PC-3 (cell line): ENCODE measurements at regions of chr9 and their contacts with region 1.

Region 1: GRCh38 chr9:114487607-114488300 is 17.5 kb downstream of the WHRN start:
- DNase-seq: peak; percentile 82
- ATAC-seq: peak; percentile 90
- H3K4me3 ChIP-seq: no peak overlapping the region
- H3K27ac ChIP-seq: no peak overlapping the region
- H3K4me1 ChIP-seq: peaks cover 9% of the 10 kb centered on the region
- H3K27me3 ChIP-seq: no peaks in the 10 kb centered on the region
- CTCF ChIP-seq: peak; percentile 84

Region 2: GRCh38 chr9:114138552-114138971 is 349.2 kb before region 1 on chr9:
- CTCF ChIA-PET with region 1: no interaction called
- POLR2A ChIA-PET with region 1: no interaction called
- intact Hi-C with region 1: no loop called
- DNase-seq: no peak
- ATAC-seq: no peak
- H3K4me3 ChIP-seq: no peak overlapping the region
- H3K27ac ChIP-seq: no peak overlapping the region
- H3K4me1 ChIP-seq: no peaks in the 10 kb centered on the region
- H3K27me3 ChIP-seq: peaks cover 21% of the 10 kb centered on the region; the same call in 1 of the 2 replicates
- CTCF ChIP-seq: no peak

Region 3: DNA sequence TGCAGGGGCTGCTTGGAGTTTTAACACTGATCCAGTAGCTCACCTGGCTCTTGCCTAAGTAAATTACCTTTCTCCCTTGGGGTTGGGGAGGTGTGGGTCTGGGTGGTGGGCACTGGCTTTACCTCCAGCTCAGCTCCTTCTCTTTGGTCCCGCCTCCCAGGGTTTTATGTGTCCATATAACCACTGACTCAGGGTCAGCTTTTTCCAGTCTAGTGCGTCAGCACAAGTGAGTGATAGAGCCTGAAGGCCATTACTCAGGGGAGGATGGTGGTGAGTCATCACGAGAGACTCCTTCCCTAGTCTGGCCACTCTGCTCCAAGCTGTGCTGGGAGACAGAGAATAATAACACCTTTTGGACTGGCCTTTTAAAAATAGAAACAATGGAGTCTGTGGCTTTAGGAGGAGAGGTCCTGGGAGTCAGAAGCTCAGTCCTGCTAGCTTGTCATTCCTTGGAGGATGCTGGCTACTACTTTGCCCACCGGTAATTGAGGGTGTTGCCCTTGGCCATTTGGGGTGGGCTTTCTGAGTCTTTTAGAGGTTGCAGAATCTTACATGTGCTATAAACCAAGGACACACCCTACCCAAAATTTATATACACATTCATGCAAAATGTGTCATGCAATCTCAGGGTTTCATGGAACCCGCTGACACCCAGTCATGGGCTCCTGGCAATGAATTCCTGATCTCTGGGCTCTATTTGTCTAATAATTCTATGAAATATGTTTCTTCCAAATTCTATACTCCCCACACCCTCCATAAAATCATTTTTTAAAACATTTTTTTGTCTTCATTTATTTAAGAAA is 64.3 kb after region 1 on chr9:
- CTCF ChIA-PET with region 1: interaction called, 4 read pairs
- POLR2A ChIA-PET with region 1: interaction called, 6 read pairs
- intact Hi-C with region 1: loop called (anchors 5 kb)
- DNase-seq: peak; percentile 98
- ATAC-seq: peak; percentile 96
- H3K4me3 ChIP-seq: peak overlapping the region; percentile 45
- H3K27ac ChIP-seq: peak overlapping the region; percentile 99
- H3K4me1 ChIP-seq: peaks cover 22% of the 10 kb centered on the region
- H3K27me3 ChIP-seq: no peaks in the 10 kb centered on the region
- CTCF ChIP-seq: no peak

Region 4: DNA sequence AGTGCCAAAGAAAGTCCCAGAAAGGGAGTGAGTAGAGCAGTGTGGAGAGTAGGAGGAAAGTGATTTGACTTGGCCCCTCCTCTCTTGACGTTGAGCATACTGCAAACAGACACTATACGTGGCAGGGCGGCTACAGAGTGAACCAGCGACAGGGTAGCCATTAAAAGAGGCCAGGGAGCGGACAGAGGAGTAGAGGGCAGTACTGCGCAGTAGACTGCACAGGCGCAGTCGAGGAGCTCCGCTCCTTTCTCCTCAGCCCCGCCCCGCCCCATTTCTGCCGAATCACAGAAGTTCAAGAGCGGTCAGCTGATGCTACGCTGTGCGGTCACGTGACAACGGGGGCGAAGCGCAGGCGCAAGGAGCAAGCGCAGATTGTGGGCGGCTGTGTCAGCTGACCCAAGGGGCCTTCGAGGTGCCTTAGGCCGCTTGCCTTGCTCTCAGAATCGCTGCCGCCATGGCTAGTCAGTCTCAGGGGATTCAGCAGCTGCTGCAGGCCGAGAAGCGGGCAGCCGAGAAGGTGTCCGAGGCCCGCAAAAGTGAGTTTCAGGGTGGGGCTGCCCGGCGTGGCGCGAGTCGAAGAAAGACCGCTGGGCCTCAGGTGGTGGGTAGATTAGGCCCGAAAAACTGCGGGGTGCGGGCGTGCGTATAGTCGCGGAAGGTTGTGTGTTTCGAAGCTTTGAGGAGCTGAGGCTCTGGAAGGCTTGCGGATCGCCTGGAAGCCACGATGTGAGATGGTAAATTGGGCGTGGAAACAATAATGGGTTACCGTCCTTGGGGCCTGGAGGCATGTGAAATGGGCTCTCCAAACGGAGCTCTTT is 99.8 kb after region 1 on chr9 and contains the start of gene ATP6V1G1:
- CTCF ChIA-PET with region 1: interaction called, 4 read pairs
- POLR2A ChIA-PET with region 1: no interaction called
- intact Hi-C with region 1: loop called (anchors 5 kb)
- DNase-seq: peak; percentile 97
- ATAC-seq: peak; percentile 93
- H3K4me3 ChIP-seq: peak within 1 kb of the TSS; percentile 94
- H3K27ac ChIP-seq: peak within 1 kb of the TSS; percentile 74
- H3K4me1 ChIP-seq: peaks cover 20% of the 10 kb centered on the region
- H3K27me3 ChIP-seq: no peaks in the 10 kb centered on the region
- CTCF ChIP-seq: no peak
- total RNA-seq, gene ATP6V1G1: 126 and 162 TPM in 2 replicates

Region 5: GRCh38 chr9:114611516-114612271 is 123.9 kb after region 1 on chr9:
- CTCF ChIA-PET with region 1: no interaction called
- POLR2A ChIA-PET with region 1: no interaction called
- intact Hi-C with region 1: loop called (anchors 5 kb)
- DNase-seq: peak; percentile 34
- ATAC-seq: peak; percentile 79
- H3K4me3 ChIP-seq: peak overlapping the region; percentile 87
- H3K27ac ChIP-seq: peak overlapping the region; percentile 56
- H3K4me1 ChIP-seq: peaks cover 22% of the 10 kb centered on the region; the same call in 1 of the 2 replicates
- H3K27me3 ChIP-seq: no peaks in the 10 kb centered on the region
- CTCF ChIP-seq: no peak